ENCODE measurements at regions of chr11 and their contacts with region 1.

Region 1: GRCh38 chr11:44611687-44612434 is 46.4 kb downstream of the CD82 start:
- DNase-seq: peak in 8 of 9 donors; percentile 35 to 57 (median 48)
- ATAC-seq: peak; percentile 82
- H3K4me3 ChIP-seq: no peak overlapping the region
- H3K4me3 Mint-ChIP-seq: peak overlapping the region in 9 of 10 donors; percentile 27 to 69 (median 60)
- H3K27ac ChIP-seq: peak overlapping the region; percentile 54
- H3K27ac Mint-ChIP-seq: peak overlapping the region; percentile 75 to 91 (median 89)
- H3K4me1 ChIP-seq: peaks cover 60 to 78% of the 10 kb centered on the region in 2 donors
- H3K4me1 Mint-ChIP-seq: peaks cover 40 to 96% (median 83%) of the 10 kb centered on the region in 7 donors
- H3K27me3 ChIP-seq: no peaks in the 10 kb centered on the region
- H3K27me3 Mint-ChIP-seq: no peaks in the 10 kb centered on the region

Region 2: DNA sequence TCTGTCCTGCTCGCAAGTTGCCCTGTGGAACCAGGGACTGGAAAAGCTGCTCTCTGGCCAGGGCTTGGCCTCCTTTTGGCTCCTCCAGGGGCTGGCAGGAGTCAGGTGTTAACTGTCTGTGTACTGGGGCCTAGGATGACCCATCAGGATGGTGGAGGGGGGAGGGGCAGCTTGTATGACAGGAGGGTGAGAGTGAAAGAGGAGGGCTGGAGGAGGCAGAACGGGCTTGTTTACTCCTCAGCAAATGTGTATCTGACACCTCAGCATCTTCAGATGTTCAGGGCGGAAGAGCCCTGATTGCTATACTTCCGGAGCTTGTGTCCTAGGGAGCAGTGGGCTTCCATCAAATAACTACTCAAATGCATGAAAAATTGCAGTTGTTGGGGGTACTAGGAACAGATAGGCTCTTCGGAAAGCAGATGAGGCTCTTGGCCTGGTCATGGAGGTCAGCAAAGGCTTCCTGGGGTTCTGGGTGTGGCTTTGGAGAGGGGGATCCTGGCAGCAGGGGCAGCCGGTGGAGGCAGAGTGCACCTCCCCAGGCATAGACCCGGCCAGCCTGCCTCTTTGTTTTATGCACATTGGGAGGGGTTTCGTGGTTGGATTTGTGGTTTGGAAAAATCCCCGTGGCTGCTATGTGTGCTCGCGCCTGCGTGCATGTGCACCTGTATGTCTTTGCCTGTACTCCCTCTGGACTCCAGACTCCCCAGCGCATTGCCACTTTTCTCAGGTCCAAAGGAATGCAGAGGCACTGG is 15.2 kb before region 1 on chr11:
- CTCF ChIA-PET with region 1: interaction called, 11 read pairs
- POLR2A ChIA-PET with region 1: interaction called, 47 read pairs
- intact Hi-C with region 1: loop called (anchors 1 kb)
- DNase-seq: peak; percentile 28 to 81 (median 70)
- ATAC-seq: peak; percentile 86
- H3K4me3 ChIP-seq: peak overlapping the region; percentile 54
- H3K4me3 Mint-ChIP-seq: peak overlapping the region; percentile 69 to 91 (median 80)
- H3K27ac ChIP-seq: peak overlapping the region; percentile 70
- H3K27ac Mint-ChIP-seq: peak overlapping the region; percentile 87 to 98 (median 95)
- H3K4me1 ChIP-seq: peaks cover 37 to 38% of the 10 kb centered on the region in 2 donors
- H3K4me1 Mint-ChIP-seq: peaks cover 15 to 80% (median 71%) of the 10 kb centered on the region in 7 donors
- H3K27me3 ChIP-seq: no peaks in the 10 kb centered on the region
- H3K27me3 Mint-ChIP-seq: no peaks in the 10 kb centered on the region

Region 3: GRCh38 chr11:45031912-45032519 is 420.2 kb after region 1 on chr11:
- CTCF ChIA-PET with region 1: no interaction called
- POLR2A ChIA-PET with region 1: no interaction called
- intact Hi-C with region 1: no loop called
- DNase-seq: no peak
- ATAC-seq: peak; percentile 44
- H3K4me3 ChIP-seq: no peak overlapping the region
- H3K4me3 Mint-ChIP-seq: no peak overlapping the region
- H3K27ac ChIP-seq: no peak overlapping the region
- H3K27ac Mint-ChIP-seq: peak overlapping the region in 1 of 9 donors; percentile 48
- H3K4me1 ChIP-seq: no peaks in the 10 kb centered on the region
- H3K4me1 Mint-ChIP-seq: peaks cover 0 to 11% (median 0%) of the 10 kb centered on the region in 7 donors
- H3K27me3 ChIP-seq: no peaks in the 10 kb centered on the region
- H3K27me3 Mint-ChIP-seq: peaks cover 0 to 17% (median 0%) of the 10 kb centered on the region in 5 donors